ENCODE measurements at regions of chr4 and their contacts with region 1.

Region 1: GRCh38 chr4:38160487-38161207 is 200.4 kb downstream of the PTTG2 start:
- DNase-seq: peak; percentile 75
- H3K4me3 Mint-ChIP-seq: peak overlapping the region; percentile 10
- H3K27ac Mint-ChIP-seq: peak overlapping the region; percentile 68
- H3K4me1 Mint-ChIP-seq: peaks cover 74% of the 10 kb centered on the region
- H3K27me3 Mint-ChIP-seq: no peaks in the 10 kb centered on the region

Region 2: DNA sequence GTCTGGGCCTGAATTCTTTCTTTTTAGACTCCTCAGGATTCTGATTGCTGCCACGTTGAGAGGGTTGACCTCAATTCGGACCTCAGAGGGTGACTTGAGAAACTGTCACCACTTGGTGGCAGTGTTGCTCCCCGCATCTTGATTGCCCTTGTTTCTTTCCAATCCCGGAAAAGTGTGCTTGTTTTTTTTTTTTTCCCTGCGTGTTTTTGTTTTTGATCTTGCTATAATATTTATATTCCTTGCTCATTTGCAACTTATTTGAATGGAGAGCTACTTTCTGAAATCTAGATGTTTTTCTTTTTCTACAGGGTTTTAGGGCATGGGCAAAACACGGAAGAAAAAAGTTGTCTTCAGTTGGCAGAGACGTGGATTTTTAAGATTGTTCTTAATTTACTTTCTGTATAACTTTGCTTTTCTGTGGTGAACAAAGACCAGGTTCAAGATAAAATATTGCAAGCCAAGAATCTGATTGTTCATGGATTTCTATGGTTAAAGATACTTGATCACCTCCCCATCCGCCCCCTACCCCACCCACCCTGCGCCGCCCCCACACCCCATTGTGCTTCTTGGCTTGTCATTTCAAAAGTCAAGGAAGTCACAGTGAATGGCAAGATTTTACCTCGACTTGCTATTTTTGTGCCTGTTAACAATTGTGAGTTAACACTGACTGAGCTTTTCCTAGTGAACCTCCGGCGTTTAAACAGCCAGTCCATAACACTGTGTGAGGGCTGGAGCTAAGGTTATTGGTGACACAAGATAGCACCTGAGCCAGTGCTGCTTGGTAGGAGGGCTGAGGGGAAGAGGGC is 98.4 kb before region 1 on chr4:
- CTCF ChIA-PET with region 1: interaction called, 5 read pairs
- POLR2A ChIA-PET with region 1: no interaction called
- intact Hi-C with region 1: loop called (anchors 1 kb)
- DNase-seq: peak; percentile 80
- H3K4me3 Mint-ChIP-seq: peak overlapping the region; percentile 77
- H3K27ac Mint-ChIP-seq: peak overlapping the region; percentile 70
- H3K4me1 Mint-ChIP-seq: peaks cover 14% of the 10 kb centered on the region
- H3K27me3 Mint-ChIP-seq: no peaks in the 10 kb centered on the region

Region 3: GRCh38 chr4:38078590-38079421 is 81.8 kb before region 1 on chr4:
- CTCF ChIA-PET with region 1: interaction called, 3 read pairs
- POLR2A ChIA-PET with region 1: interaction called, 4 read pairs
- intact Hi-C with region 1: loop called (anchors 2 kb)
- DNase-seq: peak; percentile 50
- H3K4me3 Mint-ChIP-seq: no peak overlapping the region
- H3K27ac Mint-ChIP-seq: peak overlapping the region; percentile 75
- H3K4me1 Mint-ChIP-seq: peaks cover 37% of the 10 kb centered on the region
- H3K27me3 Mint-ChIP-seq: no peaks in the 10 kb centered on the region

Region 4: DNA sequence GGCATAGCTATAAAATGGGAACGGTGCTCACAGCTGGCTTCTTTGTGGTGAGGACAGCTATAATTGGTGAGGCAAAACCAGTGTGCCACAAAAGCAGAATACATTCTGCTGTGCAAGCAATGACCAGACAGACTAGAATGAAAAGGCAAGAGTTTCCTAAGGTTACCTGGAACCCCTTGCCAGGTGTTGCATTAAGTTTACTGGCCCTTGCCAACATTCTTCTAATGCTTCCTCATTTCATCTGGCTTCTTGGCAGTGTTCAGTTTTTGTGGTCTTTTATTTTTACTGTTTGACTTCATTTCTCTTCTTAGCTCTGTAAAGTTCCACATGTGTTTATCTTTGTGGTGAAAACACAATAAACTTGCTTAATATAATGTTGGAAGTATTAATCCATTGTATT is 69.0 kb before region 1 on chr4:
- CTCF ChIA-PET with region 1: interaction called, 5 read pairs
- POLR2A ChIA-PET with region 1: interaction called, 15 read pairs
- intact Hi-C with region 1: loop called (anchors 1 kb)
- DNase-seq: no peak
- H3K4me3 Mint-ChIP-seq: peak overlapping the region; percentile 50
- H3K27ac Mint-ChIP-seq: peak overlapping the region; percentile 88
- H3K4me1 Mint-ChIP-seq: peaks cover 42% of the 10 kb centered on the region
- H3K27me3 Mint-ChIP-seq: no peaks in the 10 kb centered on the region

Region 5: GRCh38 chr4:38105475-38106220 is 55.0 kb before region 1 on chr4:
- CTCF ChIA-PET with region 1: no interaction called
- POLR2A ChIA-PET with region 1: no interaction called
- intact Hi-C with region 1: no loop called
- DNase-seq: no peak
- H3K4me3 Mint-ChIP-seq: no peak overlapping the region
- H3K27ac Mint-ChIP-seq: no peak overlapping the region
- H3K4me1 Mint-ChIP-seq: peaks cover 8% of the 10 kb centered on the region
- H3K27me3 Mint-ChIP-seq: no peaks in the 10 kb centered on the region

Region 6: GRCh38 chr4:38529189-38530115 is 368.8 kb after region 1 on chr4:
- CTCF ChIA-PET with region 1: no interaction called
- POLR2A ChIA-PET with region 1: no interaction called
- intact Hi-C with region 1: loop called (anchors 10 kb)
- DNase-seq: peak; percentile 88
- H3K4me3 Mint-ChIP-seq: peak overlapping the region; percentile 15
- H3K27ac Mint-ChIP-seq: peak overlapping the region; percentile 85
- H3K4me1 Mint-ChIP-seq: peaks cover 42% of the 10 kb centered on the region
- H3K27me3 Mint-ChIP-seq: peaks cover 11% of the 10 kb centered on the region